ENCODE measurements at regions of chr12 and their contacts with region 1.

Region 1: DNA sequence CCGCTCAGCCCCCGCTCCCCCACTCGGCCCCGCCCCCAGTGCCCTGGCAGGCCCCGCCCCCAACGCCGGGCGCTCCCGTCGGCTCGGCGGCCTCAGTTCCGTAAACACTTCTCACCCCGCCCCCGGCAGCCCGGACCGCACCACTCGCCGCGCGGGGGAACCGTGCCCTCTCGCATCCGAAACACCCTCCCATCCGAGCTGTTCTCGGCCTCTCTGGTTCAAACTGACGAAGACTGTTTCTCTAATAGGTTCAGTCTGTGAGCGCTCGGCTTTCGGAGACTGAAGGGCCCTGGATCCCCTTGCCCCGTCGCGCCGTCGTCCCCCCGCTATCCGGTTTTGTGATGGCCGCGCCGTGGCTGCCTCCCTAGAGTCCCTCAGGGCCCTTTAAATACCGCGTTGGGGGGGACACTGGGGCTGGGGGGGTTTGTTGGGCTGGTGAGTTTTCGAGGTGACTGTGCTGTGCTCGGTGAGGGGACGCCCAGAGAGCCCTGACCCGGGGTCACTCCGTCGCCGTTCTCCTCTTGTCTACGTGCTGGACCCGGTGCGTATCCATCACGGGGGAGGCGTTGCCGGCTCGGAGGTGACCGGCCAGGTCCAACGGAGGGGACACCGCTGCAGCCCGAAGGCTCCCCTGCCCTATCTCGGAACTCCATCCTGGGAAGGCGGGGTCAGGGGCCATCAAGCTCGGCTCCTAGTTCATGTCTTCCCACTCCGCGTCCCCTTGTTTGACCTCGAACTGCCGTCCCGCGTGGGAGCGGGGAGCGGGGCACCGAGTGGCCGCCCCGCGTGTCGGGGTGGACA is at the start of gene TCP11L2:
- DNase-seq: peak; percentile 91 to 96 (median 94)
- ATAC-seq: peak; percentile 79
- H3K4me3 ChIP-seq: peak within 1 kb of the TSS; percentile 94
- H3K4me3 Mint-ChIP-seq: peak within 1 kb of the TSS; percentile 88 to 99 (median 96)
- H3K27ac ChIP-seq: peak within 1 kb of the TSS; percentile 100
- H3K27ac Mint-ChIP-seq: peak within 1 kb of the TSS; percentile 97 to 100 (median 100)
- H3K4me1 ChIP-seq: peaks cover 15 to 49% of the 10 kb centered on the region in 2 donors
- H3K4me1 Mint-ChIP-seq: peaks cover 45 to 75% (median 55%) of the 10 kb centered on the region in 7 donors
- H3K27me3 ChIP-seq: no peaks in the 10 kb centered on the region
- H3K27me3 Mint-ChIP-seq: peaks cover 0 to 2% (median 0%) of the 10 kb centered on the region in 5 donors
- total RNA-seq, gene TCP11L2: 26.9 to 258 (median 134) TPM

Region 2: GRCh38 chr12:105330283-105330930 is 972.2 kb before region 1 on chr12 and contains the start of gene C12orf75:
- CTCF ChIA-PET with region 1: no interaction called
- POLR2A ChIA-PET with region 1: no interaction called
- intact Hi-C with region 1: loop called (anchors 5 kb)
- DNase-seq: peak; percentile 62 to 94 (median 72)
- ATAC-seq: peak; percentile 91
- H3K4me3 ChIP-seq: peak within 1 kb of the TSS; percentile 56
- H3K4me3 Mint-ChIP-seq: peak within 1 kb of the TSS; percentile 82 to 94 (median 90)
- H3K27ac ChIP-seq: peak within 1 kb of the TSS; percentile 64
- H3K27ac Mint-ChIP-seq: peak within 1 kb of the TSS; percentile 65 to 95 (median 86)
- H3K4me1 ChIP-seq: peaks cover 12 to 57% of the 10 kb centered on the region in 2 donors
- H3K4me1 Mint-ChIP-seq: peaks cover 16 to 74% (median 24%) of the 10 kb centered on the region in 7 donors
- H3K27me3 ChIP-seq: no peaks in the 10 kb centered on the region
- H3K27me3 Mint-ChIP-seq: no peaks in the 10 kb centered on the region
- total RNA-seq, gene C12orf75: 5.5 to 146 (median 13.0) TPM

Region 3: GRCh38 chr12:106205208-106206071 is 97.2 kb before region 1 on chr12:
- CTCF ChIA-PET with region 1: no interaction called
- POLR2A ChIA-PET with region 1: no interaction called
- intact Hi-C with region 1: no loop called
- DNase-seq: no peak
- ATAC-seq: no peak
- H3K4me3 ChIP-seq: no peak overlapping the region
- H3K4me3 Mint-ChIP-seq: no peak overlapping the region
- H3K27ac ChIP-seq: no peak overlapping the region
- H3K27ac Mint-ChIP-seq: no peak overlapping the region
- H3K4me1 ChIP-seq: no peaks in the 10 kb centered on the region
- H3K4me1 Mint-ChIP-seq: no peaks in the 10 kb centered on the region
- H3K27me3 ChIP-seq: no peaks in the 10 kb centered on the region
- H3K27me3 Mint-ChIP-seq: peaks cover 6 to 23% (median 15%) of the 10 kb centered on the region in 5 donors

Region 4: DNA sequence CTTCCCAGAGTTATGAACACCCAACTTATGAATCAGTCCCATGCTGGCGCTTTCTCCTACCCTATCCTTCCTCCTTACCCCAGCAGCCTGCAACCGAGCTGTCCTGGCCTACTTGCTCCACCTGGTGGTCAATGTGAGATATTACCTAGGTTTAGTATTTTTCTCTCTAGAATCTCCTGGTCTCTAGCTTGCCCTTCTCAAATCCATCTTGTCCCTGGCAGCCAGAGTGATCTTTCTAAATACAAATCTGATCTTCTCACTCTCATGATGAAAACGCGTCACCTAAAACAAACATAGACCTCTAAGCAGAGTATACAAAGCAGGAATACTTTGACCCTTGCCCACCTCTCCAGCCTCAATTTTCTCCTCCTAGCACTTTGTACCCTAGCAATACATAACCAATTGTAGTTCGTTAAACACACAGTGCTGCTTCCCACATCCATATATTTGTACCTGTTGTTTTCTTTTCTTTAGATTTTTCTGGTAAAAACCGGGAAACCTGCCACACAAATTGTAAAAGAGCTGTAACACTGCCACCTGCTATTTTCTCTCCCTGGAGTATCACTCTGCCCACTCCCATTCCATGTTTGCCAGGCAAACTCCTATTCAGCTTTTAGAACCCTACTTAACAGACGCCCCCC is 20.0 kb before region 1 on chr12:
- CTCF ChIA-PET with region 1: interaction called, 20 read pairs
- POLR2A ChIA-PET with region 1: interaction called, 86 read pairs
- intact Hi-C with region 1: loop called (anchors 1 to 2 kb)
- DNase-seq: peak; percentile 15 to 66 (median 48)
- ATAC-seq: peak; percentile 91
- H3K4me3 ChIP-seq: no peak overlapping the region
- H3K4me3 Mint-ChIP-seq: no peak overlapping the region
- H3K27ac ChIP-seq: no peak overlapping the region
- H3K27ac Mint-ChIP-seq: peak overlapping the region in 3 of 9 donors; percentile 3 to 41 (median 37)
- H3K4me1 ChIP-seq: no peaks in the 10 kb centered on the region
- H3K4me1 Mint-ChIP-seq: peaks cover 7 to 18% (median 8%) of the 10 kb centered on the region in 7 donors
- H3K27me3 ChIP-seq: no peaks in the 10 kb centered on the region
- H3K27me3 Mint-ChIP-seq: peaks cover 0 to 18% (median 4%) of the 10 kb centered on the region in 5 donors

Region 5: GRCh38 chr12:106329231-106329982 is 26.8 kb after region 1 on chr12:
- CTCF ChIA-PET with region 1: no interaction called
- POLR2A ChIA-PET with region 1: interaction called, 18 read pairs
- intact Hi-C with region 1: loop called in 1 of 2 experiments (anchors 1 kb)
- DNase-seq: no peak
- ATAC-seq: no peak
- H3K4me3 ChIP-seq: no peak overlapping the region
- H3K4me3 Mint-ChIP-seq: no peak overlapping the region
- H3K27ac ChIP-seq: no peak overlapping the region
- H3K27ac Mint-ChIP-seq: peak overlapping the region in 1 of 9 donors; percentile 22
- H3K4me1 ChIP-seq: no peaks in the 10 kb centered on the region
- H3K4me1 Mint-ChIP-seq: peaks cover 0 to 35% (median 18%) of the 10 kb centered on the region in 7 donors
- H3K27me3 ChIP-seq: no peaks in the 10 kb centered on the region
- H3K27me3 Mint-ChIP-seq: no peaks in the 10 kb centered on the region

Region 6: DNA sequence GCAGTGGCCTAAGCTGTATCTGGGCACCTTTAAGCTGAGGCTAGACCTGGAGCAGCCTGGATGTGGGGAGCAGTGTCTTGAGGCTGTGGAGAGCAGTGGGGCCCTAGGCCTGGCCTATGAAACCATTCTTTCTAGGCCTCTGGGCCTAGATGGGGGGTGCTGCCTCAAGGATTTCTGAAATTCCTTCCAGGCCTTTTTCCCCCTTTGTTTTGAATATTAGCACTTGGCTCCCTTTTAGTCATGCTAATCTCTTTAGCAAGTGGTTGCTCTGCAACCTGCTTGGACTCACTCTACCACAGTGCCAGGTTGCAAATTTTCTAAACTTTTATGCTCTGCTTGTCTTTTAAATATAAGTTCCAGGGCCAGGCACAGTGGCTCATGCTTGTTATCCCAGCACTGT is 238.6 kb after region 1 on chr12:
- CTCF ChIA-PET with region 1: no interaction called
- POLR2A ChIA-PET with region 1: no interaction called
- intact Hi-C with region 1: no loop called
- DNase-seq: no peak
- ATAC-seq: no peak
- H3K4me3 ChIP-seq: no peak overlapping the region
- H3K4me3 Mint-ChIP-seq: no peak overlapping the region
- H3K27ac ChIP-seq: no peak overlapping the region
- H3K27ac Mint-ChIP-seq: no peak overlapping the region
- H3K4me1 ChIP-seq: no peaks in the 10 kb centered on the region
- H3K4me1 Mint-ChIP-seq: no peaks in the 10 kb centered on the region
- H3K27me3 ChIP-seq: no peaks in the 10 kb centered on the region
- H3K27me3 Mint-ChIP-seq: peaks cover 1 to 15% (median 11%) of the 10 kb centered on the region in 5 donors

Region 7: GRCh38 chr12:106955377-106956047 is 652.9 kb after region 1 on chr12 and contains the start of gene TMEM263:
- CTCF ChIA-PET with region 1: no interaction called
- POLR2A ChIA-PET with region 1: interaction called, 4 read pairs
- intact Hi-C with region 1: loop called (anchors 1 kb)
- DNase-seq: peak; percentile 78 to 91 (median 86)
- ATAC-seq: peak; percentile 90
- H3K4me3 ChIP-seq: peak within 1 kb of the TSS; percentile 94
- H3K4me3 Mint-ChIP-seq: peak within 1 kb of the TSS; percentile 88 to 99 (median 96)
- H3K27ac ChIP-seq: peak within 1 kb of the TSS; percentile 94
- H3K27ac Mint-ChIP-seq: peak within 1 kb of the TSS; percentile 93 to 97 (median 96)
- H3K4me1 ChIP-seq: peaks cover 8 to 10% of the 10 kb centered on the region in 2 donors
- H3K4me1 Mint-ChIP-seq: peaks cover 17 to 57% (median 38%) of the 10 kb centered on the region in 7 donors
- H3K27me3 ChIP-seq: no peaks in the 10 kb centered on the region
- H3K27me3 Mint-ChIP-seq: peaks cover 0 to 11% (median 0%) of the 10 kb centered on the region in 5 donors
- total RNA-seq, gene TMEM263: 20.0 to 45.5 (median 31.5) TPM

Region 8: DNA sequence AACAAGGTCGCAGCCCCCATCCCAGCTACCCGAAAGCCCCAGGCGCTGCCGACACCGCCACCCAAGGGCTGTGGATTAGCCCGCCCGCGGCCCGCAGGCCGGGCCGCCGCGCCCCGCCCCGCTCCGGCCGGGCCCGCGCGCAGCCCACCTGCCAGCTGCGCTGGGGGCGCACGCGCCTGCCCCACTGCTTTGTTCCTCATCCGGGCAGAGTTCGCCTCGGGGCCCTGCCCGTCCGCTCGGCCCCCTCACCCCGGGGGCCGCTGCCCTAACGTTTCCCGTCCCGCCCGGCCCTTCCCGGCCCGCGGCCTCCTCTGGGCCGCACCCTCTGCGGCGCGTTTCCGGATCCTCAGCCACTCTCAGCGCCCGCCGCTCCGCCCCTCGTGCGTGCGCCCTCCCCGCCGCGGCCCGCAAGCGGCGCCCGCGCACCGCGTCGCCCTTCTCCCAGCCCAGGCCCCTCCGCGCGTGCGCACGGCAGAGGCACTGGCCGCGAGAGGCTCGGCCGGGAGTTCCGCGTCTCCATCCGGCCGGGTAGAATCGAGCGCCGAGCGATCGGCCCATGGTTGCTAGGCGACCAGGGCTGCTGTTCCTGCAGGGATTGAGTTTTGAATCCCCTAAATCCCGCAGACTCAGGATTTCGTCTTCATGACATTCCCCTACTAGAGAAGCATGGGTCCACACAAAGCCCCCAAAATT is 1458.4 kb after region 1 on chr12 and contains the start of gene PRDM4:
- CTCF ChIA-PET with region 1: no interaction called
- POLR2A ChIA-PET with region 1: interaction called, 3 read pairs
- intact Hi-C with region 1: loop called (anchors 2 to 5 kb)
- DNase-seq: peak; percentile 85 to 96 (median 93)
- ATAC-seq: peak; percentile 99
- H3K4me3 ChIP-seq: peak within 1 kb of the TSS; percentile 83
- H3K4me3 Mint-ChIP-seq: peak within 1 kb of the TSS; percentile 85 to 94 (median 91)
- H3K27ac ChIP-seq: peak within 1 kb of the TSS; percentile 78
- H3K27ac Mint-ChIP-seq: peak within 1 kb of the TSS; percentile 85 to 96 (median 91)
- H3K4me1 ChIP-seq: peaks cover 21% of the 10 kb centered on the region in 2 donors
- H3K4me1 Mint-ChIP-seq: peaks cover 19 to 52% (median 35%) of the 10 kb centered on the region in 7 donors
- H3K27me3 ChIP-seq: no peaks in the 10 kb centered on the region
- H3K27me3 Mint-ChIP-seq: peaks cover 0 to 5% (median 0%) of the 10 kb centered on the region in 5 donors
- total RNA-seq, gene PRDM4: 32.4 to 41.3 (median 36.4) TPM